Psoas muscle (tissue), 8 donors: ENCODE measurements at regions of chr9 and their contacts with region 1.

Region 1: GRCh38 chr9:105881654-105882349 is 187.5 kb downstream of the TMEM38B start:
- DNase-seq: peak; percentile 37 to 66
- ATAC-seq: peak; percentile 59 to 84 (median 68)
- H3K4me3 ChIP-seq: no peak overlapping the region
- H3K27ac ChIP-seq: no peak overlapping the region
- H3K4me1 ChIP-seq: no peaks in the 10 kb centered on the region
- H3K27me3 ChIP-seq: no peaks in the 10 kb centered on the region
- CTCF ChIP-seq: peak; percentile 82

Region 2: DNA sequence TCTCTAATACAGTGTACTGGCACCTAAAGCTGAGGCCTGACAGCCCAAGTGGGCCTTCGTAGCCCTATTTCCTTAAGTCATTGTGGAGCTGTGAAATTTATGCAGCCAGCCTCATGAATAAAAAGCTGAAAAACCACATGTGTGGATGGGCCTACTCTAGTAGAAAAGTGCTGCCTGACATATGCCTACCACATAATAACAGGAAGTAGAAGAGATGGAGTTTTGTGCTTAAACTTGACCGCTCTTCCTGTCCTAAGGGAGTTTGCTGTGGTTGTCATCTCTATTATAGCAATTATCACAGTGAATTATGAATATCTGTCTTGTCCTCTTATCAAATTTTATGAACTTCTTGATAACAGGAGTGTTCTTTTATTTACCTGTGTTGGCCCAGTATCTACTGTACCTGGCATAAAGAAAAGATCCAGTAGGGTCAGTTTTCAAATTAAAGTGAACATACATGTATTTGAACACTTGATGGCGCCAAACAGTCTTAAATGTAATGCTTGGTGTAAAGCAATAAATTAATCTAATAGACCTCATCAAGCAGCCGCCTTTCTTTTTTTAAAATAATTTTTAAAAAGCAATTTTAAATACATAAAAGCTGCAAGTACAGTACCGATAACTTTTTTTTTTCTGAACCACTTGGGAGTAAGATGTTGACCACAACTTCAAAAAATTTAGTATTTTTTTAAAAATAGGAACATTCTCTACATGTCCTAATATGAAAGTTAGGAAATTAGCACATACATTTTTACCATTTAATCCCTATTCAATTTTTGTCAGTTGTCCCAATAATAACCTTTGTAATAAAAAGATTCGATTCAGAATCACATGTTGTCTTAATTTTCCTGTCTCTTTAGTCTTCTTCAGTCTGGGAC is 272.8 kb before region 1 on chr9:
- intact Hi-C with region 1: loop called (anchors 2 to 5 kb)
- DNase-seq: no peak
- ATAC-seq: peak in 3 of 4 donors; percentile 61 to 90 (median 80)
- H3K4me3 ChIP-seq: no peak overlapping the region
- H3K27ac ChIP-seq: no peak overlapping the region
- H3K4me1 ChIP-seq: no peaks in the 10 kb centered on the region
- H3K27me3 ChIP-seq: no peaks in the 10 kb centered on the region
- CTCF ChIP-seq: peak; percentile 70

Region 3: DNA sequence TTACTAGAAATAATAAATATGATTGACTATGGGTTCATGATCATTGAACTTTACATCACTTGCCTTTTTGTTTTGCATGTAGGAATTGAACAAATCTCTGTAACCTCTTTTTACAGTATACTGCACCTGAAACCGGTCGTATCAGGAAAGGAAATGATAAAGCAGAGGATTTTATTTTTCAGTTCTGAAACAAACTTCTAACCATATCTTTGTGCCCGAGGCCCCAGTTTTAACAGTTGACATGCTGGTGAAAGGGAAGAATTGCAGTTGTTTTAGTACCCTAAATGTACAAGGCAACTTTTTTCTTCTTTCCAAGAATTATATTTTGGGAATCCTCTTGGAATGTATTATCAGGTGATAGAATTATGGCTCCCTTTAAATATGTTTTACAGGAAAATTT is 159.7 kb before region 1 on chr9:
- intact Hi-C with region 1: no loop called
- DNase-seq: no peak
- ATAC-seq: no peak
- H3K4me3 ChIP-seq: no peak overlapping the region
- H3K27ac ChIP-seq: no peak overlapping the region
- H3K4me1 ChIP-seq: peaks cover 3% of the 10 kb centered on the region
- H3K27me3 ChIP-seq: no peaks in the 10 kb centered on the region
- CTCF ChIP-seq: no peak

Region 4: DNA sequence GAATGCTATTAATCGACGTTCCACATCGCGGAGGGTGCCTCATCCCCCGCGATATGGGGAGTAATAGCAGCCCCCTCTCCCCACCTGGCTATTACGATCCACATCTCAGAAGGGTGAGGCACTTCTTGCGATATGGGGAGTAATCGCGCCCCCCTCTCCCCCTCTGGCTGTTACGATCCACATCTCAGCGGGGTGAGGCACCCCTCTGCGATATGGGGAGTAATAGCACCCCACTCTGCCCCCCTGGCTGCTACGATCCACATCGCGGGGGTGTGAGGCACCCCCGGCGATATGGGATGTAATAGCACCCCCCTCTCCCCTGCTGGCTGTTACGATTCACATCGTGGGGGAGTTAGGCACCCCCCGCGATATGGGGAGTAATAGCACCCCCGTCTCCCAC is 59.0 kb before region 1 on chr9:
- intact Hi-C with region 1: no loop called
- DNase-seq: no peak
- ATAC-seq: peak in 1 of 4 donors; percentile 28
- H3K4me3 ChIP-seq: no peak overlapping the region
- H3K27ac ChIP-seq: no peak overlapping the region
- H3K4me1 ChIP-seq: no peaks in the 10 kb centered on the region
- H3K27me3 ChIP-seq: no peaks in the 10 kb centered on the region
- CTCF ChIP-seq: no peak

Region 5: DNA sequence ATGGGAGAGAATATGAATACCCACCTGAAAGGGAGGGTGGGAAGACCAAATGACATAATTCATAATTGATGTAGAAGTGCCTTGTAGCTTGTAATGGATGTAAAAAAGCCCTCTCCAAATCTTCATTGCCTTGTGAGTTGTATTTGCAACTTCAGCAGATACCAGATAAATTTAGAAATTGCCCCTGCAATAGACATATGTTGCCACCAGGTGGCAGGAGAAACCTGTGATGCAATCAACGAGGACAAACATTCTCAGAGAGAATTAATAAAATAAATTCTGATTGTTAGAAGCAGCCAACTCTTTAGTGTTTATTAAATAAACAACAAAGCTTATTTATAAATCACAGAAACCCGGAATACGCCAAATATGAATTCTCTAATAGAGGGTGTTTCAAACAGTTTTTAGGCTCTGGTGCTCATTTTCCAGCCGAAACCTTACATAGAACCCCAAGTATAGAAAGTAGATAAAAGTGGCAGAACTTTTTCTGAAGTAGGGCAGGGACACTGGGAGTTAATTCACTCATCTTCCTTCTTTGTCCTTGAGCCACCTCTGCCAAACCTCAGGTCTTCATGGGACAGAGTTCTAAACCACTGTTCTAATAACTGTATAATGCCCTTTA is 39.7 kb before region 1 on chr9:
- intact Hi-C with region 1: loop called in 1 of 2 experiments (anchors 5 kb)
- DNase-seq: no peak
- ATAC-seq: no peak
- H3K4me3 ChIP-seq: no peak overlapping the region
- H3K27ac ChIP-seq: no peak overlapping the region
- H3K4me1 ChIP-seq: no peaks in the 10 kb centered on the region
- H3K27me3 ChIP-seq: no peaks in the 10 kb centered on the region
- CTCF ChIP-seq: peak; percentile 77